ENCODE measurements at regions of chr9 and their contacts with region 1.

Region 1: GRCh38 chr9:116646661-116647512 is 40.2 kb upstream of the TRIM32 start:
- DNase-seq: no peak
- CTCF ChIP-seq: peak; percentile 66

Region 2: DNA sequence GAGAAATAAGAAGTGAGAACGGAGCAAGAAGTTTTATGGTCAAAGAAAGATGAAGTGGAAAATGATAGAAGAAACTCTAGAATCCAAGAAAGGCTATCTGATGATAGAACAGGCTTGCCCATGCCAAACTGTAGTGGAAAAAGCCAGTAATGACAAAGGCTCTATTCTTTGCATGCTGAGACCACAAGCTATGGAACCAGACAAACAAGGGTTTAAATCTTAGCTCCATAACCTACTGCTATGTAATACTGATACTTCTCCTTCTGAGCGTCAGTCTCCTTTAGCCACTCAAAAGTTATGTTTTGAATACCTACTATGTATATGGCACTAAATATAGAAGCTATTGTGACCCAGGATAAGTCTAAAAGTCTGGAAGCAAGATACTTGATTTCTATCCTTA is 11.0 kb before region 1 on chr9:
- CTCF ChIA-PET with region 1: interaction called, 25 read pairs
- POLR2A ChIA-PET with region 1: no interaction called
- DNase-seq: no peak
- CTCF ChIP-seq: no peak

Region 3: GRCh38 chr9:116697362-116697761 is 50.5 kb after region 1 on chr9:
- CTCF ChIA-PET with region 1: no interaction called
- POLR2A ChIA-PET with region 1: no interaction called
- DNase-seq: no peak
- CTCF ChIP-seq: no peak

Region 4: GRCh38 chr9:116767219-116767618 is 120.3 kb after region 1 on chr9:
- CTCF ChIA-PET with region 1: no interaction called
- POLR2A ChIA-PET with region 1: no interaction called
- DNase-seq: no peak
- CTCF ChIP-seq: no peak

Measured in GM10248 (cell line).